ENCODE measurements at regions of chr1 and their contacts with region 1.

Region 1: GRCh38 chr1:210214573-210215409 is 17.8 kb upstream of the SERTAD4 start:
- DNase-seq: no peak
- ATAC-seq: no peak

Region 2: GRCh38 chr1:209956116-209956515 is 258.7 kb before region 1 on chr1:
- intact Hi-C with region 1: no loop called
- DNase-seq: no peak
- ATAC-seq: no peak

Region 3: GRCh38 chr1:210257698-210258529 is 43.1 kb after region 1 on chr1:
- intact Hi-C with region 1: loop called (anchors 1 kb)
- DNase-seq: no peak
- ATAC-seq: peak; percentile 1

Region 4: DNA sequence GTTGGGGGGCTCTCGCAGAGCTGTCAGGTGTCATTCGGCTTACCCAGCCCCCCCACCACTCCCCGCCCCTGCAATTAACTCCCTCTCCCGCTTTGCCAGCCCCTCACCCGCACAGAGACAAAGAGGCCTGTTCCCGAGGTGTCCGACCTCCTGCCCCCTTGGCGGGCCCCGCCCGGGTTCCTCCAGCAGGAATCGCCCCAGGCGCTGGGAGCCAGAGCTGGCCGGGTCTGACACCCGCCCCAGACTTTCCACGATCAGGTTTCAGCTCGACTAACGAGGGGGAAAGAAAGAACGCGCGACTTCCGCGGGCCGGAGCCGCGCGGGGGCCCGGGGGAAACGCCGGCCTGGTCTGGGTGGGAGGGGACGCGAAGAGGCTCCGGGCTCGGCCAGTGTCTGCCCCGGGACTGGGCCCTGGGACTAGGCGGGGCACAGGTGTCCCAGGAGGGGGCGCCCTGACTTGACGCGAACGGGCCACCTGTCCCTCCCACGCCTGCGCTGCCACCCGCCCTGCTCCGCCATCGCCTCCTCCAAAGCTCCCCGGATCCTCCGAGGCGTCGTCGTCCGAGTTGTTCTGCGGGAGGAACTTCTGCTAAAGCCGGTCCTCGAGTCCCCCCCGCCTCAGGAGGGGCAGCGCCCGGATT is 77.6 kb after region 1 on chr1:
- intact Hi-C with region 1: no loop called
- DNase-seq: peak; percentile 81
- ATAC-seq: peak; percentile 55

Measured in sciatic nerve (tissue), 2 donors.